Heart right ventricle (tissue), 16 donors: ENCODE measurements at regions of chr18 and their contacts with region 1.

Region 1: GRCh38 chr18:2083691-2084090 is 487.6 kb downstream of the METTL4 start:
- DNase-seq: peak in 1 of 2 donors; percentile 8
- ATAC-seq: no peak
- H3K4me3 ChIP-seq: no peak overlapping the region
- H3K27ac ChIP-seq: no peak overlapping the region
- H3K4me1 ChIP-seq: peaks cover 0 to 13% (median 7%) of the 10 kb centered on the region in 9 donors
- H3K27me3 ChIP-seq: no peaks in the 10 kb centered on the region
- CTCF ChIP-seq: peak in 7 of 9 donors; percentile 21 to 38 (median 31)

Region 2: DNA sequence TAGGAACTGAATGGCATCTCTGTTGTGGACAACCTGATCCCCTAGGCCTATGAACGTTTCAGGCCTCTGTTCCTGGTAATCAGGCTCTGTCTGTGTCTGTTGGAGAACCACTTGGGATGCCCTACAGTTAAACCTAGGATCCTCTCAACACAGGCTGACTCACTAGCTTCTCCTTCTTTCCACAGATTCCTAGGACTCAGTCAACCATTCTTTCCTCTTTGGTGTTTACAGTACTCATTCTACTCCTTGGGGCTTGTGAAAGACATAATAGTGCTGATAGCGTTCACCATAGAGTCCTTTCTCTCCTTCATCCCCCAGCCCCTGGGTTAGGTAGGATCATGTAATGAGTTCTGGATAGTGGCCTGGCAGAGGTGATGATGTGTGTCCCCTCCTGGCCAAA is 56.7 kb before region 1 on chr18:
- intact Hi-C with region 1: loop called in 1 of 10 experiments (anchors 10 kb)
- DNase-seq: no peak
- ATAC-seq: no peak
- H3K4me3 ChIP-seq: no peak overlapping the region
- H3K27ac ChIP-seq: no peak overlapping the region
- H3K4me1 ChIP-seq: no peaks in the 10 kb centered on the region
- H3K27me3 ChIP-seq: no peaks in the 10 kb centered on the region
- CTCF ChIP-seq: no peak

Region 3: GRCh38 chr18:2154278-2154677 is 70.6 kb after region 1 on chr18:
- intact Hi-C with region 1: no loop called
- DNase-seq: no peak
- ATAC-seq: no peak
- H3K4me3 ChIP-seq: no peak overlapping the region
- H3K27ac ChIP-seq: no peak overlapping the region
- H3K4me1 ChIP-seq: no peaks in the 10 kb centered on the region
- H3K27me3 ChIP-seq: no peaks in the 10 kb centered on the region
- CTCF ChIP-seq: no peak